Left colon (tissue), 2 donors: ENCODE measurements at regions of chr14 and their contacts with region 1.

Region 1: GRCh38 chr14:105700622-105701288 is 174.4 kb downstream of the TMEM121 start:
- DNase-seq: no peak
- ATAC-seq: no peak

Region 2: DNA sequence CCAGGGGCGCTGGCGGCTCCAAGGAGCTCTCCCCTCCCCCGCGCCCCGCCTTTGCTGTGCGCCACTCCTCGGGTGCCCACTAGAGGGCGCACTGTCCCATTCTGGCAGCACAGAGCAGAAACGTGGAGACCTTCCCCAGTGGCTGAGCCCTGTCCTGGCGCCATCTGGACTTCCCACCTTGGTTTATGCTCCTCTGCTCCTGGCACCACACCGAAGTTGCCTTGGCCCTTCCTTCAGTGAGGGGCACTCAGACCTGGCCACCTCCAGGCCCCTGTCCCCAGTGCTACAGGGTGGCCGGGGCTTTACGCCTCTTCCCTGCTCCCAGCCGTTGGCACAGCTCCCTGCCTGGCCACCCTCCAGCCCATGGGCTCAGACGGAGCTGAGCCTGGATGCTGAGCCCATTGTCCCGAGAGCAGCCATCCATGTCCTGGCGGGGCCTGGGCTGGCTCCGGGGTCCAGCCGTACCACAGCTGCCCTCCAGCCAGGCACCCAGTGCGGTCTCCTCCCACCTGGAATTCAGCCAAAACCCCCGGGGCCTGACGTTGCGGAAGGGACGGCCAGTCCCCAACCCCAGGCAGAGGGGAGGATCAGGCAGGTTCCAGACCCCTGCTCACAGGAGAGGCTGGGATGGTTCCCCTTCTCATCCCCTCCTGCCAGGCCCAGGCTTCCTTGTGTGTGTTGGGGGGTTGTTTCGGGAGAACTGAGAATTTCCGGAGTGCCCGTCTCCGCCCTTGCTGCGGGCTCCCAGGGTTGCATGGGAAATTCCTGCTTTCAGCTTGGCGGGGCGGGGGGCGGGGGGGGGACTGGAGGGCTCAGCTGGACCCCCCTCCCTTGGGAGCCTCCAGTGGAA is 219.6 kb before region 1 on chr14:
- intact Hi-C with region 1: no loop called
- DNase-seq: peak; percentile 77 to 90
- ATAC-seq: peak; percentile 70

Region 3: DNA sequence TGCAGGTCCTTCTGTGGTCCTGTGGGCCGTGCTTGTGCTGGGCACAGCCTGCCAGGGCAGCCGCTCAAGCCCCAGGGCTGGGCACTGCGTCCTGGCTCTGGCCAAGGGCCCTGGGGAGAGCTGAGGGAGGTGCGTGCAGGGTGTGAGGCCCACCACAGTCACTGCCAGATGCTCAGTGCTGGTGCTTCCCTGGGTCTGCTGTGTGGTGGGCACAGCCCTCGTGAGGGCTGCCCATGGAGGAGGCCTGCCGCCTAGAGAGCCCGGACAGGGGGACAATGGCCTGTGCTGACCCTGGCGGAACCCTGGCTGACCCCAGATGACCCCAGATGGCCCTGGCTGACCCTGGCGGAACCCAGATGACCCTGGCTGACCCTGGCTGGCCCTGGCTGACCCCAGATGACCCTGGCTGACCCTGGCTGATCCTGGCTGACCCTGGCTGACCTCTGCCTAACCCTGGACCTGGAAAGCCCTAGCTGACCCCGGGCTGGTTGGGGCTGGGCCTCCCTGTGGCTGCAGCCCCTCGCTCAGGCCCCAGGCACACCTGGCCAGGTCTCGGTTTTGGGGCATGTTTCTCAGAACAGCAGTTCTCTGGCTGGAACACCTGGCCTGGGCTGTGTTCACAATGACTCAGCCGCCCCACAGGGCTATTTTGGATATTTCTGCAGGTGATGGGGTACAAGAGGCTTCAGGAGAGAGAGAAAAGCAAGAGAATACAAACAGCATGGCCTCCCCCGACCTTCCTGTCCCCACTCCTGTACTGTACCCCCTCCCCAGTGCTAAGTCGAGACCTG is 119.0 kb before region 1 on chr14:
- intact Hi-C with region 1: loop called (anchors 5 to 10 kb)
- DNase-seq: no peak
- ATAC-seq: no peak